ENCODE measurements at regions of chr4 and their contacts with region 1.

Region 1: GRCh38 chr4:168815379-168816345 is 194.4 kb downstream of the CBR4 start:
- DNase-seq: peak; percentile 86
- H3K4me3 ChIP-seq: peak overlapping the region; percentile 30
- H3K27ac ChIP-seq: peak overlapping the region; percentile 89
- H3K27me3 ChIP-seq: no peaks in the 10 kb centered on the region
- CTCF ChIP-seq: no peak

Region 2: GRCh38 chr4:168631241-168632162 is 184.2 kb before region 1 on chr4:
- CTCF ChIA-PET with region 1: interaction called, 3 read pairs
- POLR2A ChIA-PET with region 1: interaction called, 15 read pairs
- DNase-seq: no peak
- H3K4me3 ChIP-seq: peak overlapping the region; percentile 78
- H3K27ac ChIP-seq: peak overlapping the region; percentile 61
- H3K27me3 ChIP-seq: no peaks in the 10 kb centered on the region
- CTCF ChIP-seq: peak; percentile 54

Region 3: GRCh38 chr4:168674077-168674747 is 141.4 kb before region 1 on chr4:
- CTCF ChIA-PET with region 1: no interaction called
- POLR2A ChIA-PET with region 1: interaction called, 10 read pairs
- DNase-seq: no peak
- H3K4me3 ChIP-seq: no peak overlapping the region
- H3K27ac ChIP-seq: peak overlapping the region; percentile 47
- H3K27me3 ChIP-seq: no peaks in the 10 kb centered on the region
- CTCF ChIP-seq: no peak

Region 4: GRCh38 chr4:168710353-168710946 is 105.2 kb before region 1 on chr4:
- CTCF ChIA-PET with region 1: interaction called, 4 read pairs
- POLR2A ChIA-PET with region 1: interaction called, 23 read pairs
- DNase-seq: peak; percentile 39
- H3K4me3 ChIP-seq: no peak overlapping the region
- H3K27ac ChIP-seq: no peak overlapping the region
- H3K27me3 ChIP-seq: no peaks in the 10 kb centered on the region
- CTCF ChIP-seq: peak; percentile 66

Region 5: DNA sequence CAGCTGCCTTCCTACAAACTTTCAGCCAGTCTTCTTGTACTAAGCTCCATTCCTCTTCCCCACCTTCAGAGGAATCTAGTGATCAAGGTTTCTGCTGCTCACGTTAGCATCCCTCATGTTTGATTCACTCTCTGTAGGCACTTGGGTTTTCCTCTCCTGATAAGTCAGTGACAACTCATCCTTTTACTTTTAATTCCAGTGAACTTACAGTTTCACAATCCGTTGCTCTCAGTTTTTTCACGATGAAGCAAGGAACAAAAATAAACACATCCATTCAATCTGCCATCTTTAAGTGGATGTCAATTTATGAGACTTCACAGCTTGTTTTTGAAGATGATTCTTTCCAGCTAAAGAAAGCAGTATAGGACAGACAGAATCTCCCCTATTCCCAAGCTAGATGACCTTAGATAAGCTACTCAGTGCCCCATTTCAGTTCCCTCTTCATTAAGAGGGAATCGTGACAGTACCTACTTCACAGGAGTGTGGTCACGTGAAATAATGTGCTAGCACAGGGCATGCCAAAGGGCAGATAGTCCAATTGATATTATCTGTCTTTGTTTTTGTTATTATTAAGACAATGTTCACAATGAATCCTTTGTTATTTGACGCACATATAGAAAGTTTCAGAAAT is 84.5 kb before region 1 on chr4:
- CTCF ChIA-PET with region 1: no interaction called
- POLR2A ChIA-PET with region 1: no interaction called
- DNase-seq: no peak
- H3K4me3 ChIP-seq: no peak overlapping the region
- H3K27ac ChIP-seq: no peak overlapping the region
- H3K27me3 ChIP-seq: no peaks in the 10 kb centered on the region
- CTCF ChIP-seq: no peak

Region 6: GRCh38 chr4:168743601-168744000 is 72.1 kb before region 1 on chr4:
- CTCF ChIA-PET with region 1: no interaction called
- POLR2A ChIA-PET with region 1: interaction called, 11 read pairs
- DNase-seq: peak; percentile 74
- H3K4me3 ChIP-seq: no peak overlapping the region
- H3K27ac ChIP-seq: peak overlapping the region; percentile 42
- H3K27me3 ChIP-seq: no peaks in the 10 kb centered on the region
- CTCF ChIP-seq: no peak

Region 7: GRCh38 chr4:168803732-168804131 is 11.9 kb before region 1 on chr4:
- CTCF ChIA-PET with region 1: no interaction called
- POLR2A ChIA-PET with region 1: interaction called, 17 read pairs
- DNase-seq: peak; percentile 59
- H3K4me3 ChIP-seq: no peak overlapping the region
- H3K27ac ChIP-seq: peak overlapping the region; percentile 59
- H3K27me3 ChIP-seq: no peaks in the 10 kb centered on the region
- CTCF ChIP-seq: no peak

Region 8: GRCh38 chr4:168914095-168914494 is 98.4 kb after region 1 on chr4:
- CTCF ChIA-PET with region 1: no interaction called
- POLR2A ChIA-PET with region 1: no interaction called
- DNase-seq: no peak
- H3K4me3 ChIP-seq: no peak overlapping the region
- H3K27ac ChIP-seq: no peak overlapping the region
- H3K27me3 ChIP-seq: no peaks in the 10 kb centered on the region
- CTCF ChIP-seq: no peak